ENCODE measurements at regions of chr18 and their contacts with region 1.

Region 1: DNA sequence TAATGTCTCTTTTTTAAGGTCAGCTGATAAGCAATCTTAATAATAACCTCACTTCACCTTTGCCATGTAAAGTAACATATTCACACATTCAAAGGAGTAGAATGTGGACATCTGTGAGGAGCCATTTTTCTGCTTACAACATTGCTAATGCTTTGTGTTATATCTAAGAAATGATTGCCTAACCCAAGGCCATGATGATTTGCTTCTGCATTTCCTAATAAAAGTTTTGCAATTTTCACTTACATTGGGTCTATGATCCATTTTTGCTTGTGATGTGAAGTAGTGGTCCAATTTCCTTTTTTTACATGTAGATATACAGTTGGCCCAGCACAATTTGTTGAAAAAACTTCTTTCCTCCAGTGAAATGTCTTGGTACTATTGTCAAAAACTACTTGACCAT is 22.0 kb downstream of the RELCH start:
- DNase-seq: no peak
- ATAC-seq: no peak
- H3K4me3 Mint-ChIP-seq: no peak overlapping the region
- H3K27ac Mint-ChIP-seq: no peak overlapping the region
- H3K4me1 Mint-ChIP-seq: peaks cover 26% of the 10 kb centered on the region
- H3K27me3 Mint-ChIP-seq: no peaks in the 10 kb centered on the region
- CTCF ChIP-seq: no peak

Region 2: DNA sequence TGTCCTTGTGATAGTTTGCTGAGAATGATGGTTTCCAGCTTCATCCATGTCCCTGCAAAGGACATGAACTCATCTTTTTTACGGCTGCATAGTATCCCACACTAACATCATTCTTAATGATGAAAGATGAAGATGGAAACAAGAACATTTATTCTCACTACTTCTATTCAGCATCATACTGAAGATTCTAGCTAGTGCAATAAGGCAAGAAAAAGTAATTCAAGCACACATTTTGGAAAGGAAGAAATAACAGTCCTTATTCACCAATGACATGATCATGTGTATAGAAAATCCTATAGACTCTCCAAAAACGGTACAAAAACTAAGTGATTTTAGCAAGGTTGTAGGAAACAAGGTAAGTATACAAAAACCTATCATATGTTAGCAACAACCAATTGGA is 15.2 kb after region 1 on chr18:
- CTCF ChIA-PET with region 1: no interaction called
- POLR2A ChIA-PET with region 1: no interaction called
- intact Hi-C with region 1: loop called (anchors 2 kb)
- DNase-seq: no peak
- ATAC-seq: no peak
- H3K4me3 Mint-ChIP-seq: no peak overlapping the region
- H3K27ac Mint-ChIP-seq: no peak overlapping the region
- H3K4me1 Mint-ChIP-seq: no peaks in the 10 kb centered on the region
- H3K27me3 Mint-ChIP-seq: no peaks in the 10 kb centered on the region
- CTCF ChIP-seq: no peak

Region 3: DNA sequence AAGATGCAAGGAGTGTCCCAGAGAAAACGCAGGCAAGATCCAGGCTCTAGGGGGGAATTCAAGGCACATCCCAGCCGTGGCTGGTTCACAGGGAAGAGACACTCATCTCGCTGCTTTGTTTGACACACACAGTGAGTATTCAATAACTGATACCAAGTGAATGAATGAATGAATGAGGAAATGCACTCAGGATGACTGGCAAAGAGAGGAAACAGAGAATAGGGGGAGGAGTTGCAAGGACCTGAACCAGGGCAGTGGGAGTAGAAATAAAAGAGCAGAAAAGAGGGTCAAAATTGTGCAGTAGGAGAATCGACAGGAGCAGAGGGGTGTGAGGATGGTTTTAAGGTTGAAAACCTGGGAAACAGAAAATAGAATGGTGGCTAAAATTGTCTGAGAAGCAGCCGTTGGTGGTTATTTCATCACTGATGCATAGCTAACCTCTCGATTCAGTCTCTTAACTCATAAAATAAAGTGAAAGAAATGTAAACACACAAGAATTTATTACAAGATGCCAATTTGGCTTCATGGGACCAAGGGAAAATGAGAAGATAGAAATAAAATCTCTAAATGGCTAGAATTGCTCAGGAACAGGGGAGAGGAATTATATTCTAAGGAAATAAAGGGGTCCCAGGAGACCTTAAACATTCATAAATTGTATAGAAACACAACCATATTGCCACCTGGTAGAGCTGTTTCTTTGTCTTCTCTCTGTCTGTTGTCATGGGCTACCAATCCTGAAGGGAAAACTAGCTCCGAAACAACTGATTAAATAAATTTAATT is 442.4 kb after region 1 on chr18:
- CTCF ChIA-PET with region 1: no interaction called
- POLR2A ChIA-PET with region 1: no interaction called
- intact Hi-C with region 1: no loop called
- DNase-seq: no peak
- ATAC-seq: no peak
- H3K4me3 Mint-ChIP-seq: peak overlapping the region; percentile 56
- H3K27ac Mint-ChIP-seq: no peak overlapping the region
- H3K4me1 Mint-ChIP-seq: peaks cover 14% of the 10 kb centered on the region
- H3K27me3 Mint-ChIP-seq: no peaks in the 10 kb centered on the region
- CTCF ChIP-seq: no peak

Measured in activated B cell treated with CpG ODN at 0.5 μM for 24 hours (primary cell).